AG04450 (cell line): ENCODE measurements at regions of chr6 and their contacts with region 1.

Region 1: GRCh38 chr6:36302227-36302976 is 32.5 kb downstream of the PNPLA1 start:
- DNase-seq: peak; percentile 72
- H3K4me3 ChIP-seq: no peak overlapping the region
- H3K27ac ChIP-seq: no peak overlapping the region
- H3K27me3 ChIP-seq: peaks cover 8% of the 10 kb centered on the region
- CTCF ChIP-seq: peak; percentile 95

Region 2: DNA sequence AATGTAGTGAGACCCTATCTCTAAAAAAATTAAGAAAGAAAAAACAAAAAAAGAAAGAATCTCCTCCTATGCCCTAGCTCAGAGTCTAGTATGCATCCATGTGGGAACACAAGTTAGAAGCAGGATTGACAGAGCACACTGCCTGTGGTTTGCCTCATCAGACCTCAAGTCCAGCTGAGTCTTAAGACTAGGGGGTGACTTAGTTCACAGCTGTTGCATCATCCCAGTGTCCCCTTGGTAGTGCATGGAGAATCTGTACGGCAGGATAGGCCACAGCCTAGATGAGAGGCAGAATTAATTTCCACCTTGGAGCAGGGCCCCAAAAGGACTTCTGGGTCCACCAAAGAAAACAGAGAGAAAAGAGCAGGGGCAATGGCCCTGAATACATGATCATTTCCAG is 18.8 kb before region 1 on chr6:
- CTCF ChIA-PET with region 1: interaction called, 11 read pairs
- POLR2A ChIA-PET with region 1: no interaction called
- DNase-seq: no peak
- H3K4me3 ChIP-seq: no peak overlapping the region
- H3K27ac ChIP-seq: no peak overlapping the region
- H3K27me3 ChIP-seq: peaks cover 50% of the 10 kb centered on the region
- CTCF ChIP-seq: no peak

Region 3: GRCh38 chr6:36318690-36319435 is 16.5 kb after region 1 on chr6:
- CTCF ChIA-PET with region 1: interaction called, 11 read pairs
- POLR2A ChIA-PET with region 1: no interaction called
- DNase-seq: no peak
- H3K4me3 ChIP-seq: no peak overlapping the region
- H3K27ac ChIP-seq: no peak overlapping the region
- H3K27me3 ChIP-seq: peaks cover 34% of the 10 kb centered on the region
- CTCF ChIP-seq: no peak

Region 4: GRCh38 chr6:36360241-36361054 is 58.0 kb after region 1 on chr6:
- CTCF ChIA-PET with region 1: interaction called, 39 read pairs
- POLR2A ChIA-PET with region 1: no interaction called
- DNase-seq: no peak
- H3K4me3 ChIP-seq: no peak overlapping the region
- H3K27ac ChIP-seq: no peak overlapping the region
- H3K27me3 ChIP-seq: peaks cover 12% of the 10 kb centered on the region
- CTCF ChIP-seq: peak; percentile 78